Naive thymus-derived CD4-positive, alpha-beta T cell (primary cell): ENCODE measurements at regions of chr10 and their contacts with region 1.

Region 1: DNA sequence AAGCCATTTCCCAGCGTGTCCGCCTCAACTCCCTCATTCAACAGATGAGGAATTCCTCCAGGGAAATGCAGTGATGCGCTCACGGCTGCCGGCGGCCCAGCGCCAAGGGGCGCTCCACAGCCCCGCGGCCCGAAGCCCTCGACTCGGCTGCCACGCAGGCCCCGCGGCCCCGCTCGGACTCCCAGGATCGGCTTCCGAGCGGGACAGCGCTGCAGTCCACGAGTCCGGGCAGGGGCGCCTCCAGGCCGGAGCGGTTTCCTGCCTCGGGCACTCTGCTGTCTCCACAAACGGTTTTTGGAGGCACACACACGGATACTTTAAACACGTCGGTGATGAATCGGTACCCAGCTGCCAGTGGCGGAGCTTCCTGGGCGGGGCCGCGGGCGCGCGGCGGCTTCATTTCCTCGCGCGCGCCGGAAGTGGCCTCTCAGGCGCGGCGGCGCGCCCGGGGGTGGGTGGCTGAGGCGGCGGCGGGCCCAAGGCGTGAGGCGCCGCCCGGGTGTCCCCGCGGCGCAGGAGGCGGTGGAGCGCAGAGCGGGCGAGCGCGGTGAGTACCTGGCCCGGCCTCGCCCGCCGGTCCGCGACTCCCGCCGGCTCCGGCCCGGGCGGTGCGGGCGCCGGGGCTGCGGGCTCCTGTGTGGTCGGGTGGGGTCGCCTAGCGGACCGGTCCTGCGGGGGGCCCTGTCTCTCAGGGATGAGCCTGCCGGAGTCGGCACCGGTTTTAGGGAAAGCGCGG is at the start of gene CSGALNACT2:
- DNase-seq: peak; percentile 82 to 92 (median 89)
- ATAC-seq: peak; percentile 86
- H3K4me3 ChIP-seq: peak within 1 kb of the TSS; percentile 83
- H3K4me3 Mint-ChIP-seq: peak within 1 kb of the TSS; percentile 93 to 100 (median 98)
- H3K27ac ChIP-seq: peak within 1 kb of the TSS; percentile 93
- H3K27ac Mint-ChIP-seq: peak within 1 kb of the TSS; percentile 95 to 100 (median 99)
- H3K4me1 ChIP-seq: peaks cover 24 to 25% of the 10 kb centered on the region in 2 donors
- H3K4me1 Mint-ChIP-seq: peaks cover 40 to 70% (median 57%) of the 10 kb centered on the region in 7 donors
- H3K27me3 ChIP-seq: no peaks in the 10 kb centered on the region
- H3K27me3 Mint-ChIP-seq: peaks cover 0 to 2% (median 0%) of the 10 kb centered on the region in 5 donors
- total RNA-seq, gene CSGALNACT2: 47.3 to 57.5 (median 52.3) TPM

Region 2: DNA sequence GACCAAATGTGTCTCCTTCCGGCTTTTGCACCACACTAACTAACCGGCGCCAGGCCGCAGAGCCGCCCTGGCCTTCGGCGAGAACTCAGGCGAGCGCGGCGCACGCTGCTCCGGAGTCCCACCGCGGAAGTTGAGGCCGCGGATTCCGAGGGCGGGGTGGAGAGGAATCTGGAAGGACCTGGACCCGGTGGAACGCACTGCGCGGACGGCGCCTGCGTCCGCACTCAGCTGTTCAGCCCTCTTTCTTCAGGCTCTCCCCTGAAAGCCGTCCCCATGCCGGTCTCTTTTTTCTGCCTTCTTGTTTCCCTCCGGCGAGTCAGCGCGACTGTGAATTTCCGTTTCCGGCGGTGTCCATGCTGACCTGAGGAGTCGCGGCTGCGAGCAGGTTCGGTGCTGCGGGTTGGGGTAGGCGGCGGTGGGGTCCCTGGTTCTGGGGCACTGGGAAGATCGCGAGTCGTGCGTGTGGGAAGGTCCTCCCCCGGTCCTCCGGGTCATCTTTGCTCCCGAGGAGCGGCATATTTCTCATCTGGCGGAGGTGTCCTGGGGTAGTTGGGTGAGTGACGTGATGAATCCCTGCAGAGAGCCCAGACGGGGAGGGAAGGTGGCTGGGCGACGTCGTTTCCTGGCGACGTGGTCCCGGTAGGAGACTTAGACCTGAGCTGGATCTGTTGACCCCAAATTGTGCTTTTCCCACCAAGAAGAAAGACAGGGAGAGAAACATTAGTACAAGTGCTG is 355.6 kb before region 1 on chr10 and contains the start of gene BMS1:
- CTCF ChIA-PET with region 1: no interaction called
- POLR2A ChIA-PET with region 1: no interaction called
- intact Hi-C with region 1: loop called (anchors 1 kb)
- DNase-seq: peak; percentile 78 to 91 (median 86)
- ATAC-seq: peak; percentile 95
- H3K4me3 ChIP-seq: peak within 1 kb of the TSS; percentile 86
- H3K4me3 Mint-ChIP-seq: peak within 1 kb of the TSS; percentile 89 to 100 (median 96)
- H3K27ac ChIP-seq: peak within 1 kb of the TSS; percentile 83
- H3K27ac Mint-ChIP-seq: peak within 1 kb of the TSS; percentile 88 to 98 (median 94)
- H3K4me1 ChIP-seq: peaks cover 0 to 13% of the 10 kb centered on the region in 2 donors
- H3K4me1 Mint-ChIP-seq: peaks cover 10 to 60% (median 45%) of the 10 kb centered on the region in 7 donors
- H3K27me3 ChIP-seq: no peaks in the 10 kb centered on the region
- H3K27me3 Mint-ChIP-seq: peaks cover 0 to 3% (median 0%) of the 10 kb centered on the region in 5 donors
- total RNA-seq, gene BMS1: 9.7 to 20.0 (median 16.9) TPM

Region 3: DNA sequence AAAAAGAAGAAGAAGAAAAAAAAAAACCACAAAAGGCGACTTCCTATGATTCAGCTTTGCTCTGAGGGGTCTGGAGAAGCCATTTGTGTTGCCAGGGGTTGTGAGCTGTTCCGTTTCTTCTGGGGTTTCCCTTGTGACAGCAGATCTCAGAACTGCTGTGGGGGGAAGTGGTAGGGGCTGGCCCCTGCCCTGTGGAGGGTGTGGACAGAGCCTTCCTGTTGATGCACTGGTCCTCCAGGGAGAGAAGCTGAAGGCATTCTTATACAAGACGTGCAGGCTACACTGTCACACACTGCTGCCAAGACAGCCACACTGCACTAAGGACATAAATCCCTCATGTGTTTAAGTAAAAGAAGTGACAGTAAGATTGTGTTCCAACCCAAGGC is 17.3 kb before region 1 on chr10:
- CTCF ChIA-PET with region 1: interaction called, 4 read pairs
- POLR2A ChIA-PET with region 1: interaction called, 46 read pairs
- intact Hi-C with region 1: loop called (anchors 1 to 2 kb)
- DNase-seq: peak in 6 of 9 donors; percentile 22 to 71 (median 36)
- ATAC-seq: peak; percentile 94
- H3K4me3 ChIP-seq: no peak overlapping the region
- H3K4me3 Mint-ChIP-seq: peak overlapping the region in 8 of 10 donors; percentile 42 to 80 (median 56)
- H3K27ac ChIP-seq: no peak overlapping the region
- H3K27ac Mint-ChIP-seq: peak overlapping the region; percentile 42 to 96 (median 80)
- H3K4me1 ChIP-seq: peaks cover 13 to 15% of the 10 kb centered on the region in 2 donors
- H3K4me1 Mint-ChIP-seq: peaks cover 19 to 56% (median 21%) of the 10 kb centered on the region in 7 donors
- H3K27me3 ChIP-seq: no peaks in the 10 kb centered on the region
- H3K27me3 Mint-ChIP-seq: no peaks in the 10 kb centered on the region

Region 4: GRCh38 chr10:43170491-43170890 is 32.3 kb after region 1 on chr10:
- CTCF ChIA-PET with region 1: interaction called, 4 read pairs
- POLR2A ChIA-PET with region 1: interaction called, 16 read pairs
- intact Hi-C with region 1: no loop called
- DNase-seq: no peak
- ATAC-seq: no peak
- H3K4me3 ChIP-seq: no peak overlapping the region
- H3K4me3 Mint-ChIP-seq: no peak overlapping the region
- H3K27ac ChIP-seq: no peak overlapping the region
- H3K27ac Mint-ChIP-seq: peak overlapping the region in 4 of 9 donors; percentile 7 to 69 (median 28)
- H3K4me1 ChIP-seq: peaks cover 0 to 9% of the 10 kb centered on the region in 2 donors
- H3K4me1 Mint-ChIP-seq: peaks cover 0 to 36% (median 14%) of the 10 kb centered on the region in 7 donors
- H3K27me3 ChIP-seq: no peaks in the 10 kb centered on the region
- H3K27me3 Mint-ChIP-seq: no peaks in the 10 kb centered on the region

Region 5: GRCh38 chr10:43348511-43349312 is 210.5 kb after region 1 on chr10:
- CTCF ChIA-PET with region 1: no interaction called
- POLR2A ChIA-PET with region 1: interaction called, 3 read pairs
- intact Hi-C with region 1: loop called in 1 of 2 experiments (anchors 1 kb)
- DNase-seq: peak; percentile 72 to 86 (median 83)
- ATAC-seq: peak; percentile 100
- H3K4me3 ChIP-seq: no peak overlapping the region
- H3K4me3 Mint-ChIP-seq: peak overlapping the region in 1 of 10 donors; percentile 6
- H3K27ac ChIP-seq: no peak overlapping the region
- H3K27ac Mint-ChIP-seq: peak overlapping the region in 5 of 9 donors; percentile 4 to 53 (median 36)
- H3K4me1 ChIP-seq: peaks cover 9% of the 10 kb centered on the region in 2 donors
- H3K4me1 Mint-ChIP-seq: peaks cover 9 to 42% (median 13%) of the 10 kb centered on the region in 7 donors
- H3K27me3 ChIP-seq: no peaks in the 10 kb centered on the region
- H3K27me3 Mint-ChIP-seq: peaks cover 0 to 22% (median 6%) of the 10 kb centered on the region in 5 donors

Region 6: DNA sequence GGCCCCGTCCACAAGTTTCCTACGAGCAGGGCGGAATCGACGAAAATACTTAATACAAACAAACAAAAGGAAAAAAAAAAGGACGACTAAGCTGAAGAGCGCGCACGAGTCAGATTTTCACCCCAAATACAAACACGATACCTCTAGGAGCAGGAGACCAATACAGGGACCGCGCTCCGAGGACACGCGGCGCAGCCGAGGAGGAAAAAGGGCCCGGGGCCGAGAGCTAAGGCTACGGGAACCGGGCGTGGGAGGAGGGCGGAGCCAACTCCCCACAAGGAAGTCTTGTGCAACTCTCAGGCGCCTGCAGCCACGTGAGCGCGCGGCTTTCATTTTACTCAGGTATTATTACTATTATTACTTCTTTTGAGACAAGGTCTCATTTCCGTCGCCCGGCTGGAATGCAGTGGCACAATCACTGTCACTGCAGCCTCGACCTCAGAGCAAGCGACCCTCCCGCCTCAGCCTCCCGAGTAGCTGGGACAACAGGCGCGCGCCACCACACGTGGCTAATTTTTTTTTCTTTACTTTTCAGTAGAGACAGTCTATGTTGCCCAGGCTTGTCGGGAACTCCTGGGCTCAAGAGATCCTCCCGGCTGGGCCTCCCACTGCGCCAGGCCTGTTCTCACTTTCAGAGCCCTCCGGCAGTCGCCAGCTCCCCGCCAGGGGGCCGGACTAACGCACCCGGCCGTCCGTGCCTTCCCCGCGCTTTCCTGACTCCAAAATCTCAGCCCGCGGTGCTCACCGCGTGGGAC is 269.6 kb after region 1 on chr10:
- CTCF ChIA-PET with region 1: no interaction called
- POLR2A ChIA-PET with region 1: interaction called, 5 read pairs
- intact Hi-C with region 1: loop called (anchors 1 kb)
- DNase-seq: peak; percentile 67 to 91 (median 79)
- ATAC-seq: peak; percentile 48
- H3K4me3 ChIP-seq: peak overlapping the region; percentile 99
- H3K4me3 Mint-ChIP-seq: peak overlapping the region; percentile 91 to 100 (median 98)
- H3K27ac ChIP-seq: peak overlapping the region; percentile 100
- H3K27ac Mint-ChIP-seq: peak overlapping the region; percentile 97 to 99 (median 98)
- H3K4me1 ChIP-seq: peaks cover 28 to 37% of the 10 kb centered on the region in 2 donors
- H3K4me1 Mint-ChIP-seq: peaks cover 31 to 50% (median 39%) of the 10 kb centered on the region in 7 donors
- H3K27me3 ChIP-seq: no peaks in the 10 kb centered on the region
- H3K27me3 Mint-ChIP-seq: peaks cover 0 to 2% (median 0%) of the 10 kb centered on the region in 5 donors

Region 7: DNA sequence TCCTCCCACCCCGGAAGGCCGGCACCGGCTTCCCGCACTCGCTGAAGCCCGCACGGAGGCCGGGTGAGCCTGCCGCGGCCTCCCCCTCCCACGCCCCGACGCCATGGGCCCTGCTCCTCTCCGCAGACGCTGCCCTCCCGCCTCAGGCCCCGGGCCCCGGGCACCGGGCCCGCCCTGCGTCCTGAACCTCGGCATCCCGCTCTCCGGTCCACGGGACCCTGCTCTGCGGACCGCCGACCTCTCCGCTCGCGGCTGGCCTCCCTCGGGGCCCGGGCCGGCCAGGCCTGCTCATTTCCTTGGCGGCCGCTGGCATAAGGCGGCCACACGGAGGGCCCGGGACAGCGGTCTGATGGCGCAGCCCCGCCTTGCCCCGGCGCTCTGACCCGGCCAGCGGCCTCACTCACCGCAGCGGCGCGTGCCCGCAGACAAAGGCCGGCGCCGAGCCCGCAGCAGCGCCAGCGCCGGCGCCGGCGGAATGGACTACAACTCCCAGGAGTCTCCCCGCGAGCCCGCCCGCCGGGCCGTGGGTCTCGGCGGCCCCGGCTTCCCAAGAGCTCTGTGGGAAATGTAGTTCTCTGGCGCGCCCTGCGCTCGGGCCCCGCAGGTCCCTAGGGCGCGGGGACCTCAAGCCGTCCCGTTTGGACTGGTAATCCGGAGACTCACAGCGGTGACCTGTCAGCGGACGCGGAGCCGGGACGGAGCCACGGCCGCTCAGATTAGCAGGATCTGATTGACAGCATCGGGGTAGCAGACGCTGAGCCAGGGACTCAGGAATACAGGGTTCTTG is 510.4 kb after region 1 on chr10 and contains the start of gene ZNF32:
- CTCF ChIA-PET with region 1: no interaction called
- POLR2A ChIA-PET with region 1: interaction called, 3 read pairs
- intact Hi-C with region 1: loop called (anchors 1 to 10 kb)
- DNase-seq: peak; percentile 74 to 85 (median 80)
- ATAC-seq: peak; percentile 99
- H3K4me3 ChIP-seq: peak within 1 kb of the TSS; percentile 70
- H3K4me3 Mint-ChIP-seq: peak within 1 kb of the TSS; percentile 88 to 96 (median 95)
- H3K27ac ChIP-seq: peak within 1 kb of the TSS; percentile 94
- H3K27ac Mint-ChIP-seq: peak within 1 kb of the TSS; percentile 86 to 98 (median 94)
- H3K4me1 ChIP-seq: peaks cover 5% of the 10 kb centered on the region in 2 donors
- H3K4me1 Mint-ChIP-seq: peaks cover 8 to 31% (median 27%) of the 10 kb centered on the region in 7 donors
- H3K27me3 ChIP-seq: no peaks in the 10 kb centered on the region
- H3K27me3 Mint-ChIP-seq: peaks cover 0 to 5% (median 0%) of the 10 kb centered on the region in 5 donors
- total RNA-seq, gene ZNF32: 19.3 to 47.0 (median 22.7) TPM